Right cardiac atrium (tissue), 5 donors: ENCODE measurements at regions of chr12 and their contacts with region 1.

Region 1: DNA sequence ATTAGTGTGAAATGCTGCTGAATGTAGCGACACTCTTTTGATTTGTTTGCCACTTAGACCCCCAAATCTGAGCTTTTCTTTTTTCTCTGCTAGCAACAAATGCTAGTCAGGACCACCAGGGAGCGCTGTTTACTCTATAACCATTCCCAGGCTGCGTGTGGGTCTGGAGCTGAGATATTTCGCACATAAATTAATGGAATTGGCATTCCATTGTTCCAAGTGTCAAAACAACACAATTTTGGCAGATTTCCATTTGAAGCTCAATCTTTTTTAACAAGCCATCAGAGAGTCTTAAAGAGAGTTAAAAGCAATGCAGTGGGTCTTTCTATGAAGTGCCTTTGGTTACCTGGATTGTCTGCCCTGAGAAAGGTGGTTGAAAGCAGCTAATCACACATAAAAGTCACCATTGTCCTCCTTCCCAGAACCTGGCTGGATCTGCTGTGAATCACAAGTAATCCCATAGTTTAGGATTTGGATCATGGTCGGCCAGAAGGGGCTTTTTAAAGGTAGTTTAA is 7.4 kb upstream of the TMEM132C start:
- DNase-seq: peak; percentile 39 to 79 (median 61)
- ATAC-seq: peak; percentile 63 to 76
- H3K4me3 ChIP-seq: no peak overlapping the region
- H3K27ac ChIP-seq: no peak overlapping the region
- H3K4me1 ChIP-seq: no peaks in the 10 kb centered on the region
- H3K27me3 ChIP-seq: no peaks in the 10 kb centered on the region

Region 2: GRCh38 chr12:128387811-128388422 is 128.3 kb after region 1 on chr12:
- intact Hi-C with region 1: loop called in 2 of 4 experiments (anchors 10 kb)
- DNase-seq: peak; percentile 60 to 75 (median 74)
- ATAC-seq: peak; percentile 48 to 79
- H3K4me3 ChIP-seq: no peak overlapping the region
- H3K27ac ChIP-seq: no peak overlapping the region
- H3K4me1 ChIP-seq: no peaks in the 10 kb centered on the region
- H3K27me3 ChIP-seq: no peaks in the 10 kb centered on the region

Region 3: DNA sequence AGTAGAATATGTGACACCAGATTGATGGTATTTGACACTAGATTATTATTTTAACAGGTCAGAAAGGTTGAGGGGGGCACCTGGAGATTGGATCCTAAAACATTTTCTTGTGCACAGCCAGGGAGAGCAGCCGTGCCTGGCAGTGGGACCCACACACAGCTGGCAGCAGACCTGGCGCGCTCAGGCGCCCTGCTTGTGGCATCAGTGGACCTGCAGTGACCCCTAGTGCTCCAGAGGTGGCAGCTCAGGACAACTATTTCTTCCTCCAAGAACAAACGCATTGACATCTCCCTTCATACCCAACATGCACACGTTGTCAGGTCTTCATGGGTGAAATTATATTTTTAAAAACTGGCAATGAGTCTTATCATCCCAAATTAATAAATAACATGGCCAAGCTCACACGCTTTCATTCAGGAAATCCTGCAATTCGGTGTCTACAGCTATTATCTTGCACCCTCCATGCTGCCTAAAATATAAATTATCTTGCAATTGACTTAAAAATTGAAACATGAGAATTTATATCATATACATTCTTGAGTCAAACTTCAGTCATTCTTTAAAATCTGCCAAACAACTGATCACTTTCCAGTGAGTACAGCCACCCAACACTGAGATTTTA is 1651.9 kb after region 1 on chr12:
- intact Hi-C with region 1: loop called in 1 of 4 experiments (anchors 10 kb)
- DNase-seq: peak in 1 of 3 donors; percentile 65
- ATAC-seq: peak; percentile 59 to 63
- H3K4me3 ChIP-seq: no peak overlapping the region
- H3K27ac ChIP-seq: no peak overlapping the region
- H3K4me1 ChIP-seq: no peaks in the 10 kb centered on the region
- H3K27me3 ChIP-seq: peaks cover 4% of the 10 kb centered on the region